Activated T-helper 1 cell treated with anti-CD3 and anti-CD28 coated beads, Interleukin-12 subunit alpha, Interleukin-12 subunit beta, Interleukin-2, Interleukin-4 antibody, amounts not matched to agents 30 ng/mL and 10 ng/mL and 1 ng/mL, durations not matched to agents 14 hours and 24 hours and 36 hours (primary cell): ENCODE measurements at regions of chr1 and their contacts with region 1.

Region 1: DNA sequence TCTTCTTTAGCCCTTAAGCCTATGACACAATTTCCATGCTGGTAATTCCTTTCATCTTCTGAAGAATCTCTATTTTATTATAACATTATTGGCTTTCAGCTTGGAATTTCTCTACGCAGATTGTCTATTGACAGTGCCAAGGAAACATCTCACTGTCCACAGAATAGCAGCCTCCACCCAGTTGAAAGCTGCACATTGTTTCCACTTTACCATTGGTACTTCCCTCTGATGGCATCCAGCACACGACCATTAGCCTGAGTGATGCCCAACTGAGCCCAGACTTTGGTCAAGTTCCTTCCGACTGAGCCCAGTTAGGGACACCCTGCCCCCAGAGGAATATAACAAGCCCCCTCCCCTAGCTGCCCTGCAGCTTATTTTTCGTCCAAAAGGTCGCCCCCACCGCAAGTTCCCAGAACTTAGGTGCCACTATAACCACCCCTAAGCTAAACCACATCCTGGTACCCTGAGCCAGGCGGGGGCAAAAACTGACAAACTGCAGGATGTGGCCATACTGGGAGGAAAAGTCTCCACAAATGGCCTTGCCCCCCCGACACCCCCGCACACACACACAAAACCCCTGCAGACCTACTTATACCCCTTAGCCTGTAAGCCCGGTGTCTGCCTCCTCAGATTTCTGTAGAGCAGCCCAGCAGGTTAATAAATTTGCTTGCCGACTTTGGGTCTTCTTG is 13.2 kb downstream of the GBP5 start:
- DNase-seq: peak; percentile 43
- H3K4me3 Mint-ChIP-seq: peak overlapping the region; percentile 76
- H3K27ac Mint-ChIP-seq: peak overlapping the region; percentile 94
- H3K4me1 Mint-ChIP-seq: peaks cover 76% of the 10 kb centered on the region
- H3K27me3 Mint-ChIP-seq: no peaks in the 10 kb centered on the region

Region 2: DNA sequence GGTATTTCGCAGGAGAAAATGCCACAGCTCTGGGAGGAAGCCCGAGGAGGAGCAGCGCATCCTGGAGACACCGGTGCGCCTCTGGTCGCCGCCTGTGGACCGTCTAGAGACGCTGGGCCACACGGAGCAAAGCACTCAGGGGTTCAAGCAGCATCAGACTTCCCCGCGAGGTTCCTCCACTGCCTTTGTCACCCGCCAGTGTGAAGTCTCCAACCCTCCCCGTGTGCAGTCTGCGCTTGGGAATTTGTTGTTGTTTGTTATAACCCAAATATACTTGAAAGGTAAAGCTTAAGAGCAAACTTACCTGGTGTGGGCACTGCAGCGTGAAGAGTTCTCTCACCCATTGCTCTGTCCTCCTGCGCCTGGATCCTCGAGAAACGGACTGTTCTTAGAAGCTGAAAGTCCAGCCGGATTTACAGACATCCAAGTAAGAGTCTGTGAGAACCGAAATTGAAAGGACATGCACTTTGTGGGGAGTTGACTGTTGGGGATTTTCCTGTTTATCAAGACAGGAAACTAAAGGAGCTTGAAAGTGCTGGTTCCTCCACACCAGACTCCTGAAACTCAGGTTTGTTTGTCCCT is 60.8 kb before region 1 on chr1 and contains the start of gene GBP4:
- intact Hi-C with region 1: loop called (anchors 1 kb)
- DNase-seq: peak; percentile 43
- H3K4me3 Mint-ChIP-seq: peak within 1 kb of the TSS; percentile 93
- H3K27ac Mint-ChIP-seq: peak within 1 kb of the TSS; percentile 93
- H3K4me1 Mint-ChIP-seq: peaks cover 88% of the 10 kb centered on the region
- H3K27me3 Mint-ChIP-seq: no peaks in the 10 kb centered on the region
- total RNA-seq, gene GBP4: 36.8 and 37.5 TPM in 2 replicates

Region 3: DNA sequence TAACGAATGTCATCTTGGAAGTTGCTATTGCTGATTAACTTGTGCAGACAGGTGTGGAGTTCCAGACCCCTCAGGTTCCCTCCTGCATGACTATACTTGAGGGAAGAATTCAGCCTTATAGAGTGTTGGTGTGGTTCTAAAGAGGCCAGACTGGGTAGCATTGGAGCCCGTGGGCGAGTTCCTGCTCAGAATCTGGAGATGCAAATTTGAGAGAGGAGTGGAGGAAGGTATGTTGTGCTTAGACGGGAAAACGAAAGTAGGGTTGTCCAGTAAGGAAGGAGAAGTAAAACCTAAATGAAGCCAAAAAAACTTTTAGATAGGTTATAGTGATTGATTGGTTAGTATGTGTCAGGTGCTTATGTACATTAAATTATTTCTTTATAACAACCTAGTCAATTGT is 814.7 kb after region 1 on chr1:
- intact Hi-C with region 1: no loop called
- DNase-seq: no peak
- H3K4me3 Mint-ChIP-seq: no peak overlapping the region
- H3K27ac Mint-ChIP-seq: no peak overlapping the region
- H3K4me1 Mint-ChIP-seq: peaks cover 6% of the 10 kb centered on the region
- H3K27me3 Mint-ChIP-seq: peaks cover 4% of the 10 kb centered on the region